Posterior cingulate gyrus (tissue), 11 donors: ENCODE measurements at regions of chr3 and their contacts with region 1.

Region 1: GRCh38 chr3:171646357-171647133 is 163.7 kb downstream of the PLD1 start:
- DNase-seq: no peak

Region 2: GRCh38 chr3:171772427-171773056 is 126.0 kb after region 1 on chr3:
- intact Hi-C with region 1: loop called (anchors 1 kb)
- DNase-seq: peak in 6 of 10 donors; percentile 49 to 92 (median 61)

Region 3: GRCh38 chr3:172341482-172342059 is 695.0 kb after region 1 on chr3:
- intact Hi-C with region 1: loop called (anchors 2 kb)
- DNase-seq: no peak